ENCODE measurements at regions of chr12 and their contacts with region 1.

Region 1: GRCh38 chr12:113030875-113031525 is 25.5 kb upstream of the DTX1 start:
- DNase-seq: peak; percentile 85
- H3K4me3 ChIP-seq: no peak overlapping the region
- H3K27ac ChIP-seq: peak overlapping the region; percentile 50
- H3K4me1 ChIP-seq: peaks cover 24% of the 10 kb centered on the region
- CTCF ChIP-seq: peak; percentile 94

Region 2: DNA sequence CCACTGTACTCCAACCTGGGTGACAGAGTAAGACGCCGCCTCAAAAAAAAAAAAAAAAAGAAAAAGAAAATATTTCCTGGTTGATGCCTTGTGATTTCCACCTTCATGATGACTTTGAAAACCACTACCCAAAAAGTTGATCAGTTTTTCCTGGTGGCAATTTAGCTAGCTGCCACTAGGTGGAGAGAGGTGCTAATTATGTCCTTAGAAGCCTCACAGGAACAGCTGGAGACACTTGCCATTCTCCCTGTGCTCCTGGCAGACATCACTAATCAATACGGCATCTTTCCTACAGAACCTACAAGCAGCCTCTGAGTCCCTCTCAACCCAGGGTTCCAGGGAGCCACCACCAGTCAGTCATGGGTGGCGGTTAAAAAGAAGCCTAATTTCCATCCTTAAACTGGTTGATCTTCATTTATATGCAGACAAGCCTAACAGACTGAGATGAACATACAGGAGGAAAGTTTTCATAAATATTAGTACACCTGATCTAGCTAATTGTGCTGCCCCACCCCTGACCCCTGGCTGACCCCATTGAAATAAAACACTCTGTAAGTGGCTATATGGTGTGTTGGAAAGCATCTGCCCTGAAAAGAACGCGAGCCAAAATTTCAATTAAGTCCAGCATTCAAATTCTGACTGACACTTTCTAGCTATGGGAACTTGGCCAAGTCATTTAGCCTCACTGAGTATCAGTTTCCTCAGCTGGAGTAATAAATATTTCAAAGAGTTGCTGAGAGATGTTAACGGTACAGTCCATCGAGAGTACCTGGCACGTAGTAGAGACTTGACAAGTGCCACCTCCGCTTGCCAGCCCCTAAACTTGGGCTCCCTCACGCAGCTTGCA is 130.5 kb before region 1 on chr12:
- CTCF ChIA-PET with region 1: no interaction called
- POLR2A ChIA-PET with region 1: no interaction called
- intact Hi-C with region 1: loop called (anchors 2 kb)
- DNase-seq: peak; percentile 79
- H3K4me3 ChIP-seq: no peak overlapping the region
- H3K27ac ChIP-seq: peak overlapping the region; percentile 7
- H3K4me1 ChIP-seq: peaks cover 45% of the 10 kb centered on the region
- CTCF ChIP-seq: peak; percentile 85

Region 3: GRCh38 chr12:113019041-113019440 is 12.0 kb before region 1 on chr12:
- CTCF ChIA-PET with region 1: interaction called, 4 read pairs
- POLR2A ChIA-PET with region 1: interaction called, 13 read pairs
- intact Hi-C with region 1: no loop called
- DNase-seq: no peak
- H3K4me3 ChIP-seq: no peak overlapping the region
- H3K27ac ChIP-seq: no peak overlapping the region
- H3K4me1 ChIP-seq: no peaks in the 10 kb centered on the region
- CTCF ChIP-seq: no peak

Region 4: DNA sequence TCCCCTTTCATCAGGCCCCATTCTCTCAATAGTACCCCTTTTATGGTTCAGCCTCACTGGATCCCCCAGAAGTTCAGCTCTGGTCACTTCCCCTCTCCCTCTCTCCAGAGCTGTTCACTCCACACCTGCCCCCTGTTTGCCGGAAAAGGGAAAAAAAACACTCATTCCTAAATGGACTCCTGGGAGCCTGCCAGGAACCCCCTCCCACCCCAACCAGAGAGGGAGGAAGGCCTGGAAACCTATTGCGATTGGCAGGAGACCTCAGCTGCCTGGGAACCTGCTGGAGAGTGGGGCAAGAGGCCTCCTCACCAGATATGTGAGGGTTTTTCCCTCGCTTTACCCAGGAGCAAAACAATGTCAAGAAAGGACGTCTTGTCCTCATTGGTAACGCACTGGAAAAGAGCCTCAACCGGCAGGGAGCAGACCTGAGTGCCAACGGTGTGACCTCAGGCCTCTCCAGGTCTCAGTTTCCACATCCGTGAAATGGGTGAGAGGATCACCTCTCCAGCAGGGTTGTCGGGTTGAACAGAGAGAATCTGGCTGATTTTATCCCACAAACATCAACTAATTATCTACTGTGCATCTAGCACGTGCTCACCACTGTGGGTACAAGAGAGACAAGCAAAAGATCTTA is 30.2 kb after region 1 on chr12:
- CTCF ChIA-PET with region 1: no interaction called
- POLR2A ChIA-PET with region 1: no interaction called
- intact Hi-C with region 1: no loop called
- DNase-seq: peak; percentile 38
- H3K4me3 ChIP-seq: peak overlapping the region; percentile 90
- H3K27ac ChIP-seq: peak overlapping the region; percentile 97
- H3K4me1 ChIP-seq: peaks cover 66% of the 10 kb centered on the region
- CTCF ChIP-seq: no peak

Measured in OCI-LY7 (cell line).